ENCODE measurements at regions of chr6 and their contacts with region 1.

Region 1: DNA sequence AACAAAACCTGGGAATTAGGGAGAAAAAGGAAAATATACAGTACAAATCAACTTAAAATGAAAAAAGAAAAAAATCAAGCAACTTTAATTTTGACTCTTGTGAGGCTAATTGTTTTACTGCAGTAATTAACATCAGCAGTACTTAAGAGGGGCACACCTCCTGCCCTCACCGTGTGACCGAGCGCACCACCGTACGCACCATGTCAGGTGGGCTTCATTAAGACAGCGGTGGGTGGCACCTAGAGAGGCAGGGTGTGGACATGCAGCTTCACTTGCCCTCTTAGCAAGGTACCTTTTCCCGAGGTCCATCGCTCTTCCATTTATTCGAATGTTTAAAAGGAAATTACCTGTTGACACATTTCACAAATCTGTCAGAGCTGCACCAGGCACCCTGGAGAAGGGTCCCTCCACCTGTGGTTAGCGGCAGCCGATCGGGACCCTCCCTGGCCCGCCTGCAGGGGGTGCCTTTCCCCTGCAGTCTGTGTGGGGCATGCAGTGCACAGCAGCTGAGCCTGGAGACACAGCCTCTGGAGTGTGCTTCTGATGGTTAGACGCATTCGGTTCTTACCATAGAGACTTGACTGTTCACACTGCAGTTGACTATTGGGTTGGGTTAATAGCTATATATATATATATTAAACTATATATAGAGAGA is 184.1 kb downstream of the TMEM242 start:
- DNase-seq: peak in 1 of 35 experiments; percentile 14
- ATAC-seq: no peak
- H3K4me3 ChIP-seq: no peak overlapping the region
- H3K4me3 Mint-ChIP-seq: no peak overlapping the region
- H3K27ac ChIP-seq: no peak overlapping the region
- H3K27ac Mint-ChIP-seq: no peak overlapping the region
- H3K4me1 ChIP-seq: peaks cover 0 to 9% of the 10 kb centered on the region in 2 experiments
- H3K4me1 Mint-ChIP-seq: peaks cover 0 to 10% (median 4%) of the 10 kb centered on the region in 3 donors
- H3K27me3 ChIP-seq: no peaks in the 10 kb centered on the region
- H3K27me3 Mint-ChIP-seq: no peaks in the 10 kb centered on the region

Region 2: DNA sequence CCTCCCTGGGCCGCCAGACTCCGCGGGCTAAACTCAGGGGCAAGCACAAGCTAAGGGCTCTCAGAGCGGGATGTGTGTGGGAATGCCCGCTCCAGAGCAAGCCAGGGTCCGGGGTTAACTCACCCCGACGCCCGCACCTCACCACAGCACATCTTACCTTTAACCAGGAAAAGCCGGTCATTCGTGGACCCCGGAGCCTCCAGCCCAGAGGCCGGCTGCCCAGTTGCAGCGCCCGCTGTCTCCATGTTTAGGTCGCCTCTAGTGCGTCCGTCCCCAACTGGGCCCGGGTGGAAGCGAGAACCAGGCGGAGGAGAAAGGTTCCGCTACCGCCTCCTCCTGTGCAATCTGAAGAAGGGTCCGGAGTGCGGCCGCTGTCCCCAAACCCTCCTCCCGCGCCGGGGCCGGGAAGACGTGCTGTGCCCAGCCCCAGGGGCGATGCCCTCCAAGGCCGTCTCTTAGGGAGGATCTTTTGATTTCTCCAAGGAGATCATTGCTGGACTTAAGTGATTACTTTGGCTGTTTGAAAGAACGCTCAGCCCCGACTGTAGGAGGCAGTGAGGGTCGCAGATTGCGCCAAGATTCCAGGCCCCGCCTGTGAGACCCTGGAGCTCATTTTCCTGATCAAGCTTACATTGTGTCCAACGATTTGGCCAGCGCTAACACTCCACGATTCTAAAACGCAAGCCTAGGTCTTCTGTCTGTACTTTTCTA is 184.2 kb after region 1 on chr6 and contains the start of gene TMEM242:
- CTCF ChIA-PET with region 1: no interaction called
- POLR2A ChIA-PET with region 1: no interaction called
- DNase-seq: peak; percentile 56 to 93 (median 78)
- ATAC-seq: peak; percentile 94 to 97 (median 94)
- H3K4me3 ChIP-seq: peak within 1 kb of the TSS; percentile 65 to 89
- H3K4me3 Mint-ChIP-seq: peak within 1 kb of the TSS; percentile 93 to 96 (median 94)
- H3K27ac ChIP-seq: peak within 1 kb of the TSS; percentile 39
- H3K27ac Mint-ChIP-seq: peak within 1 kb of the TSS; percentile 86 to 95
- H3K4me1 ChIP-seq: peaks cover 9 to 11% of the 10 kb centered on the region in 2 experiments
- H3K4me1 Mint-ChIP-seq: peaks cover 18 to 30% (median 18%) of the 10 kb centered on the region in 3 donors
- H3K27me3 ChIP-seq: peaks cover 3 to 9% of the 10 kb centered on the region in 2 experiments
- H3K27me3 Mint-ChIP-seq: peaks cover 11 to 14% of the 10 kb centered on the region in 2 donors
- total RNA-seq, gene TMEM242: 10.3 to 17.9 (median 12.9) TPM

Region 3: DNA sequence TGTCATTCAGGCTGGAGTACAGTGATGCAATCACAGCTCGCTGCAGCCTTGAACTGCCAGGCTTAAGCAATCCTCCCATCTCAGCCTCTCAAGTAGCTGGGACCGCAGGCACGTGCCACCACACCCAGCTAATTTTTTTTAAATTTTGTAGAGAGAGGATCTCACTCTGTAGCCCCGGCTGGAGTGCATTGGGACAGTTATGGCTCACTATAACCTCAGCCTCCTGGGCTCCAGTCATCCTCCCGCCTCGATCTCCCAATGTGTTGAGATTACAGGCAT is 942.4 kb after region 1 on chr6:
- CTCF ChIA-PET with region 1: no interaction called
- POLR2A ChIA-PET with region 1: interaction called in 1 of 2 experiments, 10 read pairs
- DNase-seq: peak in 1 of 35 experiments; percentile 16
- ATAC-seq: no peak
- H3K4me3 ChIP-seq: no peak overlapping the region
- H3K4me3 Mint-ChIP-seq: no peak overlapping the region
- H3K27ac ChIP-seq: no peak overlapping the region
- H3K27ac Mint-ChIP-seq: no peak overlapping the region
- H3K4me1 ChIP-seq: peaks cover 0 to 5% of the 10 kb centered on the region in 2 experiments
- H3K4me1 Mint-ChIP-seq: no peaks in the 10 kb centered on the region
- H3K27me3 ChIP-seq: no peaks in the 10 kb centered on the region
- H3K27me3 Mint-ChIP-seq: no peaks in the 10 kb centered on the region

Measured in T-cell (primary cell).